AG04450 (cell line): ENCODE measurements at regions of chr2 and their contacts with region 1.

Region 1: DNA sequence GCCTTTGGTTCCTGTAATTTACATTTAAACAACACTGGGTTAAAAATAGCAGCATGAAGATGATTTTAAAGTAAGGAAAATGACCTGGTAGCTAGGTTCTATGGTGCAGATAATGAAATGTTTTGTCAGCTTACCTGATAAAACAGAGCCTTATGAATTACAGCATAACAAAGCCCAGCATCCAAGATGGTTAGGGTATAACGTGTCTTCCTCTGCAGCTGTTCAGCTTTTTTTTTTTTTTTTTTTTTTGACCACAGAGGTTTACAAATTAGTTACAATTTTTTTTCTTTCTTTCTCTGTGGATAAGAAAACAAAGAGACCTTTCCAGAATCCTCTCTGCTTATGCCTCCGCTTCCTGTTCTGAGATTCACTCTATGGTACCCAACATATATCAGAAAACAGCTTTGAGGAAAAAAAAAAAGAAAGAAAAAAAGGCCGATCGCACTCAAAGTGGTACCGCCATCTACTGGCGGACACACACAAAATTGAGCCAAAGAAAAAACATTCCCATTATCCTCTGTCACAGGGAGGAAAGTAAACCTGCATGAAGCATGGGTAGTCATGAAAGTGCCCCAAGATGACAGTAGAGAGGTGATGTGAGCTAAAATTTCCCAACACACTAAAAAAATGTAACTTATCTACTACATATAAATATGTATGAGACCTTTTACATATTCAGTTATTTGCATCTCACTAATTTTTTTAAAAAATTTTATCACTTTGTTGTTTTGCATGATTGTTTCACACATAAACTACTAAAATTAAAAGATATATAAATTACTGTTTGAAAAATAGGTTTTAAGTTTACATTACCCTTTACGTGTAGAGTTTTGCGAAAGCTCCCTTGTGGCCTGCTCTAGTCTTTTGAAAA is at the start of gene SCN3A:
- DNase-seq: peak; percentile 7
- H3K4me3 ChIP-seq: no peak within 1 kb of the TSS
- H3K27ac ChIP-seq: no peak within 1 kb of the TSS
- H3K27me3 ChIP-seq: no peaks in the 10 kb centered on the region
- CTCF ChIP-seq: peak; percentile 80
- polyA plus RNA-seq, gene SCN3A: 0.11 and 0.17 TPM in 2 replicates

Region 2: GRCh38 chr2:165003433-165004130 is 200.3 kb before region 1 on chr2:
- CTCF ChIA-PET with region 1: interaction called, 18 read pairs
- POLR2A ChIA-PET with region 1: no interaction called
- DNase-seq: no peak
- H3K4me3 ChIP-seq: no peak overlapping the region
- H3K27ac ChIP-seq: no peak overlapping the region
- H3K27me3 ChIP-seq: no peaks in the 10 kb centered on the region
- CTCF ChIP-seq: no peak

Region 3: DNA sequence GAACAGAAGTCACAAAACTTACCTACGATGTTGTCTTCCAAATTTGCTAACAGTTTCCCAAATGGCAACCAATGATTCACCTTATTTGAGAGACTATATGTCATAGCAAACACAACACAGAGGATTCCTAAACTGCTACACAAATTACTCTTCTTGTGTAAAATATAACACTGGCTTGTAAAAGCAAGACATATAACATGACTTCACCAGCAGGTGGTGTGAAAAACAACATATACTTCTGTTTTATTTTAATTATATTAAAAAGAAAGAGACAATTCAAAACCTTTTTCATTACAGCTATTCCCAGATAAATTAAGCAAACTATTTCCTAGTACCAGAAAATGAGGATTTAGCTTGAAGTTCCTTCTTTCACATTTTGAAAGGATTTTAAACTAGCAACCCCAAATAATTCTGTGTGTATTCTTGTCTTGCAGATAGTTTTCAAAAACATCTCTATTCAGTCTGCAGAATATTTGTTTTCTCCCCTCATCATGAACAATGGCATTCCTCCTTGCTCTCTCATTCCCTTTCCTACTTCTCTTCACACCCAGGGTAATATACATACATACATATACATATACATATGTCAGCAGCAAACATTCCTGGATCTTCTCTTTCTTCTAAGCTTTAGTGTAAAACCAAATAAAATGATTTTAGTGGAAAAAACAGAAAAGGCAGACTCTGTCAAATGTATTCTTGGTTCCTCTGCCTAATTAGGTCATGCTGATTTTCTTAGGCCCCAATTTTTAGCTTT is 62.1 kb before region 1 on chr2:
- CTCF ChIA-PET with region 1: interaction called, 36 read pairs
- POLR2A ChIA-PET with region 1: no interaction called
- DNase-seq: no peak
- H3K4me3 ChIP-seq: no peak overlapping the region
- H3K27ac ChIP-seq: no peak overlapping the region
- H3K27me3 ChIP-seq: no peaks in the 10 kb centered on the region
- CTCF ChIP-seq: peak; percentile 38

Region 4: GRCh38 chr2:165173215-165173614 is 30.7 kb before region 1 on chr2:
- CTCF ChIA-PET with region 1: interaction called, 39 read pairs
- POLR2A ChIA-PET with region 1: no interaction called
- DNase-seq: no peak
- H3K4me3 ChIP-seq: no peak overlapping the region
- H3K27ac ChIP-seq: no peak overlapping the region
- H3K27me3 ChIP-seq: no peaks in the 10 kb centered on the region
- CTCF ChIP-seq: no peak

Region 5: GRCh38 chr2:165214093-165214492 is 10.2 kb after region 1 on chr2:
- CTCF ChIA-PET with region 1: interaction called, 55 read pairs
- POLR2A ChIA-PET with region 1: no interaction called
- DNase-seq: no peak
- H3K4me3 ChIP-seq: no peak overlapping the region
- H3K27ac ChIP-seq: no peak overlapping the region
- H3K27me3 ChIP-seq: no peaks in the 10 kb centered on the region
- CTCF ChIP-seq: no peak

Region 6: DNA sequence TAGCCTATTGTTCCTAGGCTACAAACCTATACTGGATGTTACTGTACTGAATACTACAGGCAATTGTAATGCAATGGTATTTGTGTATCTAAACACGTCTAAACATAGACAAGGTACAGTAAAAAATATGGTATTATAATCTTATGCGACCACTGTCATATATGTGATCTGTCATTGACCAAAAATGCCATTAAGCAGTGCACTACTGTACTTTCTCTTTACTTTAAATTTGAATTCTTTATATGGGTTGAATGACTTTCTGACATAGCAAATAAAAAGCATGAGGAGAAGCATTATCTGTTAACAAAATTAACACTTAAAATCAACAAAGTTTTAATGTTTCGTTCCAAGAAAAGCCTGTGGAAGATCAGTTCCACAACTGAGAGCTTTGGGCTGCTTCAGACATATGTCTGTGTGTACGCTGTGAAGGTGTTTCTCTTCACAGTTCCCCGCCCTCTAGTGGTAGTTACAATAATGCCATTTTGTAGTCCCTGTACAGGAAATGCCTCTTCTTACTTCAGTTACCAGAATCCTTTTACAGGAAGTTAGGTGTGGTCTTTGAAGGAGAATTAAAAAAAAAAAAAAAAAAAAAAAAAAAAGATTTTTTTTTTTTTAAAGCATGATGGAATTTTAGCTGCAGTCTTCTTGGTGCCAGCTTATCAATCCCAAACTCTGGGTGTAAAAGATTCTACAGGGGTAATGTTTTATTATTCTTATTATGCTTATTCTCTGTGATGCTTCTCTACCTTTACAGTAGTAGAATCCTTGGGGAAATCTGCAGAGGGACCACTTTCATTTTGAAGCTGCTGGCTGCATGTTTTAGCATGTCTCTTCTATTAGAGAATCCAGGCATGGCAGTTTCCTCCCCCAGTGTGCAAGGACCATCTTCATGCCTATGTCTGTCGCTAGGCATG is 89.8 kb after region 1 on chr2:
- CTCF ChIA-PET with region 1: interaction called, 11 read pairs
- POLR2A ChIA-PET with region 1: no interaction called
- DNase-seq: peak; percentile 73
- H3K4me3 ChIP-seq: peak overlapping the region; percentile 50
- H3K27ac ChIP-seq: no peak overlapping the region
- H3K27me3 ChIP-seq: no peaks in the 10 kb centered on the region
- CTCF ChIP-seq: peak; percentile 87